ENCODE measurements at regions of chr15 and their contacts with region 1.

Region 1: GRCh38 chr15:74482661-74483060 is 21.7 kb upstream of the UBL7 start:
- DNase-seq: peak; percentile 26
- ATAC-seq: peak; percentile 100
- H3K4me3 Mint-ChIP-seq: no peak overlapping the region
- H3K27ac Mint-ChIP-seq: peak overlapping the region; percentile 83
- H3K4me1 Mint-ChIP-seq: peaks cover 11% of the 10 kb centered on the region
- H3K27me3 Mint-ChIP-seq: no peaks in the 10 kb centered on the region
- CTCF ChIP-seq: no peak

Region 2: GRCh38 chr15:74349241-74349788 is 133.3 kb before region 1 on chr15:
- CTCF ChIA-PET with region 1: no interaction called
- POLR2A ChIA-PET with region 1: no interaction called
- DNase-seq: no peak
- ATAC-seq: no peak
- H3K4me3 Mint-ChIP-seq: no peak overlapping the region
- H3K27ac Mint-ChIP-seq: no peak overlapping the region
- H3K4me1 Mint-ChIP-seq: peaks cover 29% of the 10 kb centered on the region
- H3K27me3 Mint-ChIP-seq: peaks cover 1% of the 10 kb centered on the region; the same call in 1 of the 2 replicates
- CTCF ChIP-seq: no peak

Region 3: GRCh38 chr15:74438721-74439316 is 43.8 kb before region 1 on chr15:
- CTCF ChIA-PET with region 1: interaction called, 16 read pairs
- POLR2A ChIA-PET with region 1: no interaction called
- DNase-seq: peak; percentile 78
- ATAC-seq: peak; percentile 70
- H3K4me3 Mint-ChIP-seq: no peak overlapping the region
- H3K27ac Mint-ChIP-seq: no peak overlapping the region
- H3K4me1 Mint-ChIP-seq: peaks cover 31% of the 10 kb centered on the region
- H3K27me3 Mint-ChIP-seq: peaks cover 20% of the 10 kb centered on the region
- CTCF ChIP-seq: peak; percentile 72

Region 4: DNA sequence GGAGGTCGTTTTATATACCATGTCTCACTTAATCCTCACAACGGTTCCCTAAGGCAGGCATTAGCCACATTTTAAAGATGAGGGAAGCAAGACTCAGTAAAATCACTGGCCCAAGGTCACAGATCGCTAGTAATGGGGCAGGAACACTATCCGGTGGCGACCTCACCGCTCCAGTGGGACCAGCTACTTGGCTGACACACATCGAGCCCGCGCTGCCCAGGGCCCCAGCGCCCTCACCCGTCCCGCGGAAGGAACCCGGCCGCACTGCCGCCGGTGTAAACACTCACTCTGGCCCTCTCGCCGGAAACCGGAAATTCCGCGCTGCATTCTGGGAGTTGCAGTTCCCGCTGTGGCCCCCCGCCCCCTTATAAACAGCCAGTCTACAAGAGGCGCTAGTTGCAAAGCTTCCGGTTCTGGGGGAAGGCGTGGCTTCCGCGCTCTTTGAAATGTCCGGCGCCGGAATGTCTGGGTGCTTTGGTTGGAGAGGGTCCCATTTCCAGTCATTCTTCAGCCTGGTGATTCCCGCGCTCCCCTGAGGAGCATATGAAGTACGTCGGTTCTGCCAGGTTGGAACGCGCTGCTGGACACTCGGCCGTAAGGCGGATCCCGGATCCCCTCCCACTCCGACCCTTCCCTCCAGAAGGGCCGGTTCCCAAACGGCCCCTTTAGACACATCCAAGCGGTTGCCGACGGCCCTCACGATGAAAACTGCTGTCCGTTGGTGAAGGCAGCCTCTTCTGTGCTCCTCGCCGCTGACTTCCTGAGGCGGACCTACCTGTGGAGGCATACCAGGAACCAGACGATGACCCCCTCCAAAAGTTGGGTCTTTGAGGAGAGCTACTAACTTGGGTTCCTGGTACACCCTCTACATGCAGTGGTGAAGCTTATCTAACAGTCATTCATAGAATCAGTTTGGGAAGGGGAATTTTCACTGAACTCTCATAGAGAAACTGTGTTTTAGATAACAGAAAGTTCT is 21.5 kb before region 1 on chr15 and contains the start of gene UBL7:
- CTCF ChIA-PET with region 1: interaction called, 14 read pairs
- POLR2A ChIA-PET with region 1: interaction called, 4 read pairs
- DNase-seq: peak; percentile 99
- ATAC-seq: peak; percentile 93
- H3K4me3 Mint-ChIP-seq: peak within 1 kb of the TSS; percentile 98
- H3K27ac Mint-ChIP-seq: peak within 1 kb of the TSS; percentile 98
- H3K4me1 Mint-ChIP-seq: peaks cover 20% of the 10 kb centered on the region
- H3K27me3 Mint-ChIP-seq: no peaks in the 10 kb centered on the region
- CTCF ChIP-seq: no peak
- total RNA-seq, gene UBL7: 62.1 to 70.1 TPM (median 70.1 TPM) in 3 replicates

Region 5: GRCh38 chr15:74511583-74511982 is 28.9 kb after region 1 on chr15:
- CTCF ChIA-PET with region 1: no interaction called
- POLR2A ChIA-PET with region 1: no interaction called
- DNase-seq: no peak
- ATAC-seq: no peak
- H3K4me3 Mint-ChIP-seq: no peak overlapping the region
- H3K27ac Mint-ChIP-seq: no peak overlapping the region
- H3K4me1 Mint-ChIP-seq: 0 out of 2 replicates have a peak, but pooled peaks cover 3% of the 10 kb centered on the region
- H3K27me3 Mint-ChIP-seq: no peaks in the 10 kb centered on the region
- CTCF ChIP-seq: no peak

Region 6: GRCh38 chr15:74641151-74641550 is 158.5 kb after region 1 on chr15:
- CTCF ChIA-PET with region 1: no interaction called
- POLR2A ChIA-PET with region 1: no interaction called
- DNase-seq: no peak
- ATAC-seq: no peak
- H3K4me3 Mint-ChIP-seq: no peak overlapping the region
- H3K27ac Mint-ChIP-seq: no peak overlapping the region
- H3K4me1 Mint-ChIP-seq: peaks cover 23% of the 10 kb centered on the region
- H3K27me3 Mint-ChIP-seq: no peaks in the 10 kb centered on the region
- CTCF ChIP-seq: no peak